AG04449 (cell line): ENCODE measurements at regions of chr1 and their contacts with region 1.

Region 1: GRCh38 chr1:224513787-224514209 is 79.2 kb upstream of the WDR26 start:
- DNase-seq: no peak
- H3K4me3 ChIP-seq: no peak overlapping the region
- CTCF ChIP-seq: peak; percentile 97

Region 2: DNA sequence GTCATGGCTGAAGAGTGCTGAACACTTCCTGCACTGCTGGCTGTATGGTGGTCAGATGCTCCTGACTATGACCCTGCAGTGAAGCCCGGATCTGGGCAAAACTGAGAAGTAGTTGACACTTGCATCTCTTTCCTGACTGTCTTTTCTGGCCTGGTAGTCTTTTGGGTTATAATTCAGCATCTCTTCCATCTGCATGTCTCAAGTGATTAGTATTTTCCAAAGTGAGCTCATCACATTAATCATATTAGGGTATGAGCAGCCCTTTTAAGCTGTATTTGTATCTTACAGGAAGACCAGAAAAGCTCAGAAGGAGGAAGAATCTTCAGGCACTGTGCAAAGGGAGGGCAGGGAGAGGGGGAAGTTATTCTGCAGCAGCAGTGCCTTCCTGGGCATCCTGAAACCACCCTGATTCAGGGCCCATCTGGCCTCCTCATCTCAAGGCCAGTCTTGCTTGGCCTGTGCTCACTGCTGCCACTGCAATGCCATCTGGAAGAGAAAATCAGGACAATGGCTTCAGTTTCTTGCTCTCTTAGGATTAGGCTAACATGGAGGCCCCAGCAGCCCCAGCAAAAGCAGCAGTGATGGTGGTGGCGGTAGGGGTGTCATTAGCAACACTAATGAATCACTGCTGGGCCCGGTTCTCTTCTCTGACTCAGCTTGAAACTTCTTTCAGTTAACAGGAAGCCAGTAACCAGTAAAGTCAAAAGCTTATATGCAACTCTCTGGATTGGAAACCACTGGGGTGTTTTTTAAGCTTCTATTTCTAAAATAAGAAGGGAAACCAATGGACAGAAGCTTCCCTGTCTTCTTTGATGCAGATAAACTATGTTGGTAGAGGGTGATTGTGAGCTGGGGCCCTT is 15.9 kb before region 1 on chr1:
- CTCF ChIA-PET with region 1: interaction called, 49 read pairs
- POLR2A ChIA-PET with region 1: interaction called, 3 read pairs
- DNase-seq: peak; percentile 51
- H3K4me3 ChIP-seq: no peak overlapping the region
- CTCF ChIP-seq: no peak

Region 3: GRCh38 chr1:224592636-224593582 is 79.1 kb after region 1 on chr1:
- CTCF ChIA-PET with region 1: interaction called, 11 read pairs
- POLR2A ChIA-PET with region 1: interaction called, 4 read pairs
- DNase-seq: peak; percentile 57
- H3K4me3 ChIP-seq: no peak overlapping the region
- CTCF ChIP-seq: no peak

Region 4: GRCh38 chr1:224650290-224650689 is 136.5 kb after region 1 on chr1:
- CTCF ChIA-PET with region 1: interaction called, 175 read pairs
- POLR2A ChIA-PET with region 1: no interaction called
- DNase-seq: no peak
- H3K4me3 ChIP-seq: no peak overlapping the region
- CTCF ChIP-seq: no peak

Region 5: GRCh38 chr1:224863970-224864369 is 350.2 kb after region 1 on chr1:
- CTCF ChIA-PET with region 1: interaction called, 511 read pairs
- POLR2A ChIA-PET with region 1: no interaction called
- DNase-seq: no peak
- H3K4me3 ChIP-seq: no peak overlapping the region
- CTCF ChIP-seq: no peak

Region 6: GRCh38 chr1:224901087-224901810 is 387.5 kb after region 1 on chr1:
- CTCF ChIA-PET with region 1: interaction called, 82 read pairs
- POLR2A ChIA-PET with region 1: no interaction called
- DNase-seq: no peak
- H3K4me3 ChIP-seq: no peak overlapping the region
- CTCF ChIP-seq: no peak